GM10248 (cell line): ENCODE measurements at regions of chr1 and their contacts with region 1.

Region 1: DNA sequence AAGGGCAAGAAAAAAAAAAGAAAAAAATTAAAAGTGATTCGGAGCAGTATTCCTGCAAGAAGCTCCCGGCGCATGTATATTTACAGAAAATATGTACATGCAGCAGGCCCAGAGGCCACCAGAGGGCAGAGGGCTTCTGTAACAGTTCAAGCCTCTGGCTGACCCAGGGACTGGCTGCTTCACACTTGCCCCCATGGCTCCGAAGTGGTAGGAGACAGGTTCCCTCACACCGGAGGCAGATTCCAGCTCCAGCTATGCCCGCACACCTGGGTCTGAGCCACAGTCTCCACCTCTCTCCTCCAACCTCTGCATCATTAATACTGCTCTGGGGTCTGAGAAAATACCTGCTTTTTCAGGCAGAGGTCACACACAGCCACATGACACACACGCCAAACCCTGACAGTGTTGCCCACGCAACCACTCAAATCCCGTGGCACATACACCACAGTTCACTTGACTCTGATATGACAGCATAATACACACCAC is 2.2 kb upstream of the ARHGAP30 start:
- DNase-seq: peak; percentile 80
- CTCF ChIP-seq: peak; percentile 82

Region 2: GRCh38 chr1:161045750-161046571 is 26.0 kb before region 1 on chr1 and contains the start of gene USF1:
- CTCF ChIA-PET with region 1: interaction called, 30 read pairs
- POLR2A ChIA-PET with region 1: interaction called, 5 read pairs
- DNase-seq: peak; percentile 89
- CTCF ChIP-seq: no peak

Region 3: GRCh38 chr1:161082991-161083742 is 11.2 kb after region 1 on chr1:
- CTCF ChIA-PET with region 1: interaction called, 73 read pairs
- POLR2A ChIA-PET with region 1: no interaction called
- DNase-seq: no peak
- CTCF ChIP-seq: no peak

Region 4: DNA sequence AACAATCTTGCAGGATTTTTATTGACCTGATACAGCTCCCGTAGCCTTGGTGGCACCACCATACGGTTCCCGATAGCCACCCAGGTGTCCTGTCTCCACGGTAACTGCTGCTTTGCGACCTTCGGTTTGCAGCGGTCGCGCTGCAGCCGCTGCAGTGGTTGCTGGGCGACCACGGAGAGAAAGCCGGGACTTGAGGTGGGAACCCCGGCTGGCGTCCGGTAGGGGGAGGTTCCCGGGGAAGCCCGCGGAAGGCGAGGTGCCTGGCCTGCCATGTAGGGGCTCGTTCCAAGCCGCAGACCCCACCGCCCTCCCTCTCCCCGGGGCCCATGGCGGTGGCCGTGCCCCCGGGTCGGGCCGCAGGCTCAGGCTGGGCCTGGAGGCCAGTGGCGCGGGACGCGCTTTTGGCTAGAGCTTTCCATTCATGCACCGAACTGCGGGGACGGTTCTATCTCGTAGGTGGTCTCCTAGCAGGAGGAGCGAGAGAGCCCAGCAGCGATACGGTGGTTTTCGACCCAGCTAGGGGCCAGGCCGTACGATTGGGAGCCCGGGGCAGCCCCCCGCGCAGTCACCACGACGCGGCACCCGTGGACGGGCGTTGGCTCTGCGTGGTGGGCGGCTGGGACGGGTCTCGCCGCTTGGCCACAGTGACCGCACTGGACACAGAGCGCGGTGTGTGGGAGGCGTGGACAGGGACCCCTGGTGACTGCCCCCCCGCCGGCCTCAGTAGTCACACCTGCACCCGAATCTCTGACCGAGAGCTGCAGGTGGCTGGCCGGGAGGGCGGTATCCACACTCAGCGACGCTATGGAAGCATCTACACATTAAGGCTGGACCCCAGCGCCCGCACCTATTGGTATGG is 26.5 kb after region 1 on chr1 and contains the start of gene KLHDC9:
- CTCF ChIA-PET with region 1: interaction called, 137 read pairs
- POLR2A ChIA-PET with region 1: interaction called, 4 read pairs
- DNase-seq: peak; percentile 95
- CTCF ChIP-seq: peak; percentile 16

Region 5: DNA sequence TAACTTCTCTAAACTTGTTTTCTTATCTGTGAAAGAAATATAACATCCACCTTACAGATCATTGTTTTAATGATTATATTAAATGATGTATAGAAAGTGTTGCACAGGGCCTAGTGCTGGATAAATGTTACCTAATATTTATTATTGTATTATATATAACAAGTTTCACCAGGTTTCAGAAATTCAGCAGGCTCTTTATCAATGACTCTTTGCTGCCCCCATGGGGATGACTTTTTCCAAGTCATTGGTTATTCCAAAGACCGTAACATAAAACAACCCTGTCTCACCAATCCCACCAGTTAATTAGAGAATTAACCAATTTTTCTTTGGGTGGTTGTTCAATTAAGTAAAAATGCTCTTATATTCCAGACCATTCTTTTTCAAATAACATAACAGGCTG is 67.8 kb after region 1 on chr1:
- CTCF ChIA-PET with region 1: interaction called, 71 read pairs
- POLR2A ChIA-PET with region 1: no interaction called
- DNase-seq: peak; percentile 56
- CTCF ChIP-seq: peak; percentile 37

Region 6: DNA sequence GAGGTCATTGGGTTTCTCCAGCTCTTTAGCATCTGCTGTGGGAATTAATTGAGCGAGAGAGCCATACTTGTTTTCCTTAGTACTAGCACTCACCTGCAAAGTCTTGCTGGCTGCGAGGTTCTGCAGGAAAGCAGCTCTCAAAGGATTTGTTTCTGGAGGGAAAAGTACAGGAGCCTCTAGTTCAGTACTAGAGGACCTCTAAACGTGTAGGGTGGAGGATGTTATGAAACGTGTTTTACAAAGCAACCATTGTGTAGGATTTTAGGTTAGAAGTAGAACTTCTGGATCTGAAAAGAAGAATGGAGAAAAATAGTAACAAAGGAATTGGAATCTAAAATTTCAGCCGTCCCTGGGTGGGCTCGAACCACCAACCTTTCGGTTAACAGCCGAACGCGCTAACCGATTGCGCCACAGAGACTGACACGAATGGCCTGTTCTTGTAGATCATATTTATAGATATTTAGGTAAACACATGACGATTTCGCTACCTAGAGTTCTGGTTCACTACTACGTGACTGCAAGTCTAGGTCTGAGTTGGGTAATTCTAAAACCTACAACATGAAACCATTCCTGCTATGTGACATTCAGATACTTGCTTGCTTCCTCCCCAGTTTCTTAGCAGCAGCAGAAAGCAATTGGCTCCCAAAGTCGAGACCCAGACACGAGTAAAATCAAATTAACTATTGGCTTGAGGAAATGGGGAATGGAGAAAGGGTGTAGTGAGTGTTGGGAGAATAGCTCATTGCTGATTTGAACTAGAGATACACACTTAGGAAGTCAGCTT is 356.0 kb after region 1 on chr1:
- CTCF ChIA-PET with region 1: no interaction called
- POLR2A ChIA-PET with region 1: no interaction called
- DNase-seq: peak; percentile 36
- CTCF ChIP-seq: no peak